PC-3 (cell line): ENCODE measurements at regions of chr4 and their contacts with region 1.

Region 1: GRCh38 chr4:175536852-175537453 is 275.1 kb downstream of the GPM6A start:
- DNase-seq: peak; percentile 84
- ATAC-seq: peak; percentile 50
- H3K4me3 ChIP-seq: no peak overlapping the region
- H3K27ac ChIP-seq: no peak overlapping the region
- H3K4me1 ChIP-seq: peaks cover 25% of the 10 kb centered on the region
- H3K27me3 ChIP-seq: no peaks in the 10 kb centered on the region
- CTCF ChIP-seq: peak; percentile 57

Region 2: GRCh38 chr4:174365018-174365587 is 1171.8 kb before region 1 on chr4:
- CTCF ChIA-PET with region 1: no interaction called
- POLR2A ChIA-PET with region 1: no interaction called
- intact Hi-C with region 1: loop called (anchors 5 kb)
- DNase-seq: peak; percentile 54
- ATAC-seq: no peak
- H3K4me3 ChIP-seq: no peak overlapping the region
- H3K27ac ChIP-seq: no peak overlapping the region
- H3K4me1 ChIP-seq: 0 out of 2 replicates have a peak, but pooled peaks cover 8% of the 10 kb centered on the region
- H3K27me3 ChIP-seq: no peaks in the 10 kb centered on the region
- CTCF ChIP-seq: peak; percentile 62; the same call in 1 of the 2 replicates

Region 3: GRCh38 chr4:174873931-174874330 is 663.0 kb before region 1 on chr4:
- CTCF ChIA-PET with region 1: no interaction called
- POLR2A ChIA-PET with region 1: no interaction called
- intact Hi-C with region 1: loop called (anchors 2 kb)
- DNase-seq: peak; percentile 63
- ATAC-seq: no peak
- H3K4me3 ChIP-seq: no peak overlapping the region
- H3K27ac ChIP-seq: no peak overlapping the region
- H3K4me1 ChIP-seq: peaks cover 16% of the 10 kb centered on the region
- H3K27me3 ChIP-seq: no peaks in the 10 kb centered on the region
- CTCF ChIP-seq: peak; percentile 56

Region 4: DNA sequence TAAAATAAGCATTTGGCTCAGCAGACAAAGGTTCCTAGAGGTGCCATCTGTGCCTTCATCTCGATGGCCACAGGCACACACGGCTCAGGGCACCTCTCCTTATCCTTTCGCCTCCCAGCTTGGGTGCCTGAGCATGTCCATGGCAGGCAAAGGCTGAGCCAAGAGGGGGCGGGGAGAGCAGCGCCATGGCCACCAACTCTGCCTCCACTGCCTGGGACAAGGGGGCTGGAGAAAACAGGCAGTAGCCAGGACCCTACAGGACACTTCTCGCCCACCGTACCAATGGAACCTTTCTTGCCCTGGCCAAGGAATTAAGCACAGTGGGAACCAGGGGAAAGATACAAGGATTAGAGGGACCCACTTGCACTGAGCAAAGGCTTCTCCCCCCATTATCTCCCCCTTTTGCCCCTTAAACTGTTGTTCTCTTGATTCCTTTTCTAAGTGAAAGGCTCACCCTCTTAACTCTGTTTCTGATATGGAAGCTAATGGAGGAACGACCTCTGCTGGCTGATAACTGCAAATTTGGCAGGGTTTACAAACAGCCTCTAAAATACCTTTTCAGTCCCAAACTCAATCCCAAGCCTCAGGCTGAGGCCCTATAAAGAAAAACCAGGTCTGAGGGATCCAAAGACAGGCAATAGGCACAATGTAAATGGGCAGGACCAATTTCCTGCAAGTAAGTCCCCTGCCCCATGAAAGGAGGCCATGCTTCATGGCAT is 283.6 kb before region 1 on chr4:
- CTCF ChIA-PET with region 1: no interaction called
- POLR2A ChIA-PET with region 1: no interaction called
- intact Hi-C with region 1: loop called (anchors 5 kb)
- DNase-seq: peak; percentile 38
- ATAC-seq: 0 out of 2 replicates have a peak, but pooled peaks have one; percentile 37
- H3K4me3 ChIP-seq: no peak overlapping the region
- H3K27ac ChIP-seq: no peak overlapping the region
- H3K4me1 ChIP-seq: no peaks in the 10 kb centered on the region
- H3K27me3 ChIP-seq: no peaks in the 10 kb centered on the region
- CTCF ChIP-seq: peak; percentile 67

Region 5: GRCh38 chr4:175419239-175419767 is 117.7 kb before region 1 on chr4:
- CTCF ChIA-PET with region 1: no interaction called
- POLR2A ChIA-PET with region 1: no interaction called
- intact Hi-C with region 1: loop called (anchors 1 kb)
- DNase-seq: peak; percentile 90
- ATAC-seq: peak; percentile 80
- H3K4me3 ChIP-seq: peak overlapping the region; percentile 28; the same call in 1 of the 2 replicates
- H3K27ac ChIP-seq: peak overlapping the region; percentile 99
- H3K4me1 ChIP-seq: peaks cover 42% of the 10 kb centered on the region
- H3K27me3 ChIP-seq: no peaks in the 10 kb centered on the region
- CTCF ChIP-seq: no peak